HEK293 (cell line): ENCODE measurements at regions of chr21 and their contacts with region 1.

Region 1: DNA sequence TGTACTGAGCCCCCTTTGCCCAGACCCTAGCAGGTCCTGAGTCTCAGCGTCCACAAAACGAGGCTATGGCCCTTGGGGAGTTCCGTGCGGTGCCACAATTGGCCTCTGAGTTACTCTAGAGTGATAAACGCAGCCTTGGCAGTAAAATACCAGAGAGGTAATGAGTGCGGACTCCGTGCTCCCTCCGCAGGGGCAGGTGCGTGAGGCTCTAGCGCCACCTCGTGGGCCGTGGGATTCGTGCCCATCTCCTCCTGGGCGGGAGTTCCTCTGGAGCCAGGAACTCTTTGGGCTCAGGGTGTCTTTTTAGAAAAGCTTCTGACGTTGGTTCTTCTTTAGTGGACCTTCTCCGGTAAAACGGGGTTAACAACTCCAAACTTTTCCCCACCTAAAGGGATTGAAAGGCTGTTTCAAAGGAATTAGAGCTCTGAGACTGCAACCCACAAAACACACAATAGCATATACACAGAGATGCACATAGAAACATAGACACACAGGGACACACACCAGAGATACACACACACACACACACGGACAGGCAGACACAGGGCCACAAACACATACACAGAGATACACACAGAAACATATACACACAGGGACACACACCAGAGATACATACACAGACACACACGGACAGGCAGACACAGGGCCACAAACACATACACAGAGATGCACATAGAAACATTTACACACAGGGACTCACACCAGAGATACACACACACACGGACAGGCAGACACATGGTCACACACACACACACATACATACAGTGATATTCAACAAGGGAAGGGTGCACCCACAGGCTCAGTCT is 99.4 kb downstream of the KCNJ15 start:
- H3K4me3 ChIP-seq: no peak overlapping the region
- H3K27ac ChIP-seq: no peak overlapping the region
- H3K4me1 ChIP-seq: peaks cover 12% of the 10 kb centered on the region
- CTCF ChIP-seq: peak; percentile 96

Region 2: GRCh38 chr21:37711836-37712568 is 644.2 kb before region 1 on chr21:
- CTCF ChIA-PET with region 1: interaction called, 16 read pairs
- POLR2A ChIA-PET with region 1: no interaction called
- H3K4me3 ChIP-seq: no peak overlapping the region
- H3K27ac ChIP-seq: peak overlapping the region; percentile 33; the same call in 1 of the 2 replicates
- H3K4me1 ChIP-seq: peaks cover 19% of the 10 kb centered on the region
- CTCF ChIP-seq: peak; percentile 73

Region 3: DNA sequence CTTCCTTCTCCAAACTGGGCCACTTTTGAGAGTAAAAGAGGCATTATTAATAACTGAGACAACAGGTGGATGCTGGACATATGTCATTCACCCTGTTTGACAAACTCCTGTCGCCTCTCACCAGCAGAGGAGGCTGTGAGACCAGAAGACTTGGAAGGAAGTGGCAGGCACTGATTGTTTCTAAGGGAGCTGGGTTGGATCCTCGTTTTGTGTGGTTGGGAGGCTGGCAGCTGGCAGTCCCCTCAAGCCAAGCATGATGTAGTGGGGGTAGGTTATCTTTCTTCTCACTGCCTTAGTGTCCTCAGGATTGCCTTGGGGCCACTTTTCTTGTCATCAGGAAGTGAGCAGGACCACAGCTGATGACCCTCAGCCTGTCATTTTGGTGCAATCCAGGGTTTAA is 185.9 kb before region 1 on chr21:
- CTCF ChIA-PET with region 1: interaction called, 378 read pairs
- POLR2A ChIA-PET with region 1: interaction called, 3 read pairs
- H3K4me3 ChIP-seq: no peak overlapping the region
- H3K27ac ChIP-seq: no peak overlapping the region
- H3K4me1 ChIP-seq: no peaks in the 10 kb centered on the region
- CTCF ChIP-seq: no peak

Region 4: DNA sequence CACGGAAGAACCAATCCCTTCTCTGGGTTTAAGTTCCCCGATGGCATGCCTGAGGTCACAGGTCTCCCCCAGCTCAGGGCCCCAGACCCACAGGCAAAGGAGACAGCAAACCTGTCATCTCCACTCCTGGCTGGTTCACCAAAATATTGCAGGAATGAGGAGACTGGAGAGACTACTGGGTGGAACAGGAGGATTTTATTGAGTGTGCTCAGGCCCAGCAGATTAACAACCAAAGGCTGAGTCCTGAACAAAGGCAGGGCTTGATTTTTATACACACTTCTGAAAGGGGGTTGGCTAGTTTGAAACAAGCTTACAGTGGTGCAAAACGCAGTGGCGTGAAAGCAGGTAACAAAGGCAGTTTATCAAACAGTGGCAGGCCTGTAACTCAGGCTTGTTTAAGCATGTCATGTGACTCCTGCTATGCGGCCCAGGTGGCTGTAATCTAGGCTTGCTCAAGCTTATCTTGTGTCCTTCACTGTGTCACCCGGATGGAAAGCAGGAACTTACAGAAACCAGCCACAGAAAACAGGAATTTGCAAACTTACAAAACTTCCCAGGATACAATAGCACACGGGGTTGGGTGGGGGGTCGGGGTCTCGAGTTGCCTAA is 126.8 kb before region 1 on chr21:
- CTCF ChIA-PET with region 1: interaction called, 16 read pairs
- POLR2A ChIA-PET with region 1: no interaction called
- H3K4me3 ChIP-seq: no peak overlapping the region
- H3K27ac ChIP-seq: no peak overlapping the region
- H3K4me1 ChIP-seq: no peaks in the 10 kb centered on the region
- CTCF ChIP-seq: no peak

Region 5: GRCh38 chr21:38323721-38324531 is 32.3 kb before region 1 on chr21:
- CTCF ChIA-PET with region 1: interaction called, 41 read pairs
- POLR2A ChIA-PET with region 1: no interaction called
- H3K4me3 ChIP-seq: no peak overlapping the region
- H3K27ac ChIP-seq: peak overlapping the region; percentile 66; the same call in 1 of the 2 replicates
- H3K4me1 ChIP-seq: peaks cover 19% of the 10 kb centered on the region
- CTCF ChIP-seq: no peak

Region 6: GRCh38 chr21:38376235-38376634 is 20.0 kb after region 1 on chr21:
- CTCF ChIA-PET with region 1: interaction called, 10 read pairs
- POLR2A ChIA-PET with region 1: no interaction called
- H3K4me3 ChIP-seq: no peak overlapping the region
- H3K27ac ChIP-seq: no peak overlapping the region
- H3K4me1 ChIP-seq: no peaks in the 10 kb centered on the region
- CTCF ChIP-seq: no peak

Region 7: GRCh38 chr21:38525454-38525853 is 169.3 kb after region 1 on chr21:
- CTCF ChIA-PET with region 1: no interaction called
- POLR2A ChIA-PET with region 1: no interaction called
- H3K4me3 ChIP-seq: no peak overlapping the region
- H3K27ac ChIP-seq: no peak overlapping the region
- H3K4me1 ChIP-seq: no peaks in the 10 kb centered on the region
- CTCF ChIP-seq: no peak

Region 8: GRCh38 chr21:38561613-38562581 is 205.7 kb after region 1 on chr21:
- CTCF ChIA-PET with region 1: no interaction called
- POLR2A ChIA-PET with region 1: no interaction called
- H3K4me3 ChIP-seq: no peak overlapping the region
- H3K27ac ChIP-seq: no peak overlapping the region
- H3K4me1 ChIP-seq: no peaks in the 10 kb centered on the region
- CTCF ChIP-seq: no peak